Esophagus squamous epithelium (tissue), 5 donors: ENCODE measurements at regions of chr2 and their contacts with region 1.

Region 1: DNA sequence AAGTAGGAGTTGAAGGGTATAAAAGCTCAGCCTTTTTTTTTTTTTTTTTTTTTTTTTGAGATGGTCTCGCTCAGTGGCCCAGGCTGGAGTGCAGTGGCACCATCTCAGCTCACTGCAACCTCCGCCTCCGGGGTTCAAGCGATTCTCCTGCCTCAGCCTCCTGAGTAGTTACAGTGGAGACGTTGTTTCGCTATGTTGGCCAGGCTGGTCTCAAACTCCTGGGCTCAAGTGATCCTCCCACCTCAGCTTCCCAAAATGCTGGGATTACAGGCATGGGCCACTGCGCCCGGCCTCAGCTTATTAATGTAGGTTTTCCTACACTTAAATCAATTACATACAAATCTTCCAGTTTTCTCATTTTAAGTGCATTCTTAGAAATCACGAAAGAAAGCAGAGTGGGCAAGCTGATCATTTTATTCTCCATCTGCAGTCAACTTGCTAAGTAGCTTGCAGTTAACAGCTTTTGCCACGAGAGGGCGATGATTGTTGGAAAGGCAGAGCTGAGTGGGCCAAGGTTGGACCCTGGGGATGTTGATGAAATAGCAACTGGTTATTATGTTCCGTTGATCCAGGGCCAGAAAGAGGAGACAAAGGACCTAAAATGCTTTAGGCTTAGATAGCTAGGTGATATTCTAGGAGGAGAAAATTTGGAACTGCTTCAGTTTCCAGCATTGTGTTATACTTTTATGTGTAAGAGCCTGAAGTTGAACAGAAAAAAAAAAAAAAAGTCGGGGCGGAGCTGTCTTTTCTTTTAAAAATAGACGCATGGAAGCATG is 234.4 kb upstream of the EPAS1 start:
- DNase-seq: no peak
- H3K4me3 ChIP-seq: no peak overlapping the region
- H3K27ac ChIP-seq: peak overlapping the region in 2 of 4 donors; percentile 53 to 66
- H3K4me1 ChIP-seq: peaks cover 6 to 21% (median 14%) of the 10 kb centered on the region in 3 donors
- H3K27me3 ChIP-seq: no peaks in the 10 kb centered on the region
- CTCF ChIP-seq: peak; percentile 74 to 91 (median 86)
- POLR2A ChIP-seq: no peak

Region 2: DNA sequence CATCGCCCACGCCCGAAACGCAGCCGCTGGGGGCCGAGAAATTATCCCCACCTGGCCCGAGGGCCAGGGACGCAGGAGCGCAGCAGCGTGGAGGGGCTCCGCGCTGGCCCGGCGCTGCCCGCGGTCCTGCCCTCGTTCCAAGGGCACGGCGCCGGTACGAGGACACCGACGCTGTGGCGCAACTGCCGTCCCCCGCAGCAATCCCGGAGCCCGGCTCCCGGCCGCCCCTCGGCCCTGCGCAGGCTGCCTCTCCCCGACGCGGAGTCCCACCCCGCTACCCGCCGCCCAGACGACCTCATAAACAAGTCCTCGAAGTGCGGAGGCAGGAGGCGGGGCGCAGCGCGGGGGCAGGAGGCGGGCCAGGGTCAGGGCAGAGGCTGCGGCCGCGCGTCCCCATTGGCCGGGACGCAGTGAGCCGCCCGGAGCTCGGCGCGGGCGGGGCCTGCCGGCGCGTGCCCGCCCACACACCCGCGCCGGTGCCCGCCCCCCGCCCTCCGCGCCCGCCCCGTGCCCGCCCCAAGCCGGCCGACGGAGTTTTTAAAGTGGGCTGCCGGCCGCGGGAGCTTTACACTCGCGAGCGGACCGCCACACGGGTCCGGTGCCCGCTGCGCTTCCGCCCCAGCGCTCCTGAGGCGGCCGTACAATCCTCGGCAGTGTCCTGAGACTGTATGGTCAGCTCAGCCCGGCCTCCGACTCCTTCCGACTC is 234.2 kb after region 1 on chr2 and contains the start of gene EPAS1:
- intact Hi-C with region 1: loop called (anchors 10 kb)
- DNase-seq: peak; percentile 50
- H3K4me3 ChIP-seq: peak within 1 kb of the TSS; percentile 79 to 85 (median 81)
- H3K27ac ChIP-seq: peak within 1 kb of the TSS; percentile 93 to 98 (median 94)
- H3K4me1 ChIP-seq: peaks cover 4 to 43% (median 23%) of the 10 kb centered on the region in 3 donors
- H3K27me3 ChIP-seq: no peaks in the 10 kb centered on the region
- CTCF ChIP-seq: peak in 1 of 6 experiments; percentile 0
- POLR2A ChIP-seq: peak in 2 of 4 donors; percentile 86 to 88
- total RNA-seq, gene EPAS1: 86.7 to 151 (median 105) TPM

Region 3: GRCh38 chr2:46749042-46749531 is 686.3 kb after region 1 on chr2:
- intact Hi-C with region 1: no loop called
- DNase-seq: no peak
- H3K4me3 ChIP-seq: peak overlapping the region in 1 of 4 donors; percentile 10
- H3K27ac ChIP-seq: peak overlapping the region; percentile 11 to 51 (median 48)
- H3K4me1 ChIP-seq: peaks cover 11 to 36% (median 17%) of the 10 kb centered on the region in 3 donors
- H3K27me3 ChIP-seq: no peaks in the 10 kb centered on the region
- CTCF ChIP-seq: no peak
- POLR2A ChIP-seq: no peak